Right cardiac atrium (tissue), 5 donors: ENCODE measurements at regions of chr11 and their contacts with region 1.

Region 1: GRCh38 chr11:83537131-83537610 is 251.0 kb upstream of the CCDC90B start:
- DNase-seq: no peak
- ATAC-seq: no peak
- H3K4me3 ChIP-seq: no peak overlapping the region
- H3K27ac ChIP-seq: no peak overlapping the region
- H3K4me1 ChIP-seq: peaks cover 3% of the 10 kb centered on the region
- H3K27me3 ChIP-seq: no peaks in the 10 kb centered on the region

Region 2: GRCh38 chr11:83601914-83602527 is 64.8 kb after region 1 on chr11:
- intact Hi-C with region 1: loop called in 1 of 4 experiments (anchors 10 kb)
- DNase-seq: no peak
- ATAC-seq: no peak
- H3K4me3 ChIP-seq: no peak overlapping the region
- H3K27ac ChIP-seq: no peak overlapping the region
- H3K4me1 ChIP-seq: no peaks in the 10 kb centered on the region
- H3K27me3 ChIP-seq: no peaks in the 10 kb centered on the region

Region 3: DNA sequence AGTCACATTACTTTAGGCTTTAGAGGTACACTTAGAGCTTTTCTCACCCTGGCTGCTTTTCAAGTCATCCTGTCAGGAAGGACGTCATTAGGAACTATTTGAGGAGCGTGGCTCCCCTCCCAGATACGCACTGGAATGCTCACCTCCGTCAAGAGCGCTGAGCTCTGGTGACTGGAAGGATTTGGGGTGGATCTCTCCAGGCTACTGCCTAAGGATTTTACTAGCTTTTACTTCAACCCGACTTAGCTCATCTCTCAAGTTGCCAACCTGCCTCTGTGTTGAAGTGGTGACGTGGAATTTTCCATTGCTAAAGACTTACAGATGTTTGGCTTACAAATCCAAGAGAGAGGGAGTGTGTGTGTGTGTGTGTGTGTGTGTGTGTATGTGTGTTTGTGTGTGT is 104.3 kb after region 1 on chr11:
- intact Hi-C with region 1: no loop called
- DNase-seq: peak; percentile 40 to 57 (median 50)
- ATAC-seq: peak; percentile 92 to 94
- H3K4me3 ChIP-seq: no peak overlapping the region
- H3K27ac ChIP-seq: peak overlapping the region; percentile 71
- H3K4me1 ChIP-seq: no peaks in the 10 kb centered on the region
- H3K27me3 ChIP-seq: no peaks in the 10 kb centered on the region